Dorsolateral prefrontal cortex (tissue), 120 donors: ENCODE measurements at regions of chr3 and their contacts with region 1.

Region 1: GRCh38 chr3:47513125-47513929 is at the start of gene ELP6:
- DNase-seq: peak; percentile 93 to 97 (median 95)
- H3K4me3 ChIP-seq: peak within 1 kb of the TSS; percentile 54 to 99 (median 88)
- H3K27ac ChIP-seq: peak within 1 kb of the TSS; percentile 88 to 100 (median 99)
- H3K27me3 ChIP-seq: no peaks in the 10 kb centered on the region
- CTCF ChIP-seq: peak in 55 of 56 donors; percentile 21 to 80 (median 63)
- total RNA-seq, gene ELP6: 22.2 to 44.0 (median 33.7) TPM

Region 2: DNA sequence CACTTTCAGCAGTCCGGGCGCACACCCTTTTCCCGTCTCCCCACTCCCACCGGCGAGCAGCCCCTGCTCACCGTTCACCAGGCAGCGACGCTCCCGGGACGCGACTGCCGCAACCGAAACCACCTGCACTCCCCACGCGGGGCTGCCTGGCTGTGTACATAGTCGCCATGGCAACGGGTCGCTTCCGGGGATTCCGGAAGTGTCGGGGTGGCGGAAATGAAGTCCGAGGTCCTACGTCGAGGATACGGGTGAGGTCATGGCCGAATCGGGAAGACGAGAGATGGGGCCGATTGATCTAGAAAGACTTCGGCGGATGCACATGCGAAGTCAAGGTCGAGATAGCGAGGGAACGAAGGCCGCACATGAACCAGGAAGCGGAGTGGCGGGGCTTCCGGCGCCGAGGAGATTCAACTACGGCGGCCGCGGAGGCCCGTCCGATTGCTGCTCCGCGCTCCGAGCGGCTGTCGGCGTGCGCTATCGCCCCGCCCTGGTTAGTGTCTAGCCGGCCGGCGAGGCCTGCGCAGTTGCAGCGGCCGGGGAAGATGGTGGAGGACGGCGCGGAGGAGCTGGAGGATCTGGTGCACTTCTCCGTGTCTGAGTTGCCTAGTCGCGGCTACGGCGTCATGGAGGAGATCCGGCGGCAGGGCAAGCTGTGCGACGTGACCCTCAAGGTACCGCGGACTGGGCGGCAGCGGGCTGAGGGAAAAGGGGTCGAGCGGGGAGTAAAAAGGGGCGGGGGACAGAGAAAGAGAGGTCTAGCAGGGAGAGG is 230.7 kb before region 1 on chr3 and contains the starts of genes KIF9 and KLHL18:
- intact Hi-C with region 1: loop called in 1 of 2 experiments (anchors 5 kb)
- DNase-seq: peak; percentile 89 to 95 (median 94)
- H3K4me3 ChIP-seq: peak within 1 kb of the TSS; percentile 68 to 99 (median 87)
- H3K27ac ChIP-seq: peak within 1 kb of the TSS; percentile 63 to 99 (median 94)
- H3K27me3 ChIP-seq: no peaks in the 10 kb centered on the region
- CTCF ChIP-seq: peak in 46 of 56 donors; percentile 14 to 70 (median 39)
- total RNA-seq, gene KIF9: 3.1 to 15.9 (median 8.8) TPM
- total RNA-seq, gene KLHL18: 19.8 to 62.3 (median 38.0) TPM

Region 3: DNA sequence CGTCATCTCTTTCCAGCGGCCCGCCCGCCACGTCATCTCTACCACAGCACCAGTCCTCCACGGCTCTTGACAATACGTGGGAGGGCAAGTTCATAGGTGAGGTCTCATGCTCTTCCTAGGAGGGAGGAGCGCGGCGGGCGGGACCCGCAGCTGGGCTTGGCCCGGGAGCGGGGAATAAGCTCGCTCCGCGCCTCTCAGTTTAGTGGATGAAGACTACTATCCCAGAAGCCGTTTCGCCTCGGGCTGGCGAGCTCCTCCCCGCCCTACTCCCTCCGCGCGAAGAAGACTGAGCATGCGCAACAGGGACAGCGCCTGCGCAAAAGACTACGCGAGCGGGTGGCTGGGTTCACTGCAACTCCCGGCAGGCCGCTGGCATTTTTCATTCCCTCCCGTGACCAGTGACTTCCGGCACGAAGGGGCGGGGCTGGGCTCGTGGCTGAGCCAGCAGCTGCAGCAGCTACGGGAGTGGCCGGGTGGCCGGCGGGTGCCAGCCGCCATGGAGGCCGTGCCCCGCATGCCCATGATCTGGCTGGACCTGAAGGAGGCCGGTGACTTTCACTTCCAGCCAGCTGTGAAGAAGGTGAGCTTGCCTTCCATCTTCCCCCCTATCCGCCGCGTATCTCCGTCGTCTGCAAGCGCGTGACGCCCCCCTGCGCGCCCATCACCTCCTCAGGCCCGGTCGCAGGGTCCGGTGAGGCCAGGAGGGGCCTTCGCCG is 132.6 kb before region 1 on chr3 and contains the start of gene PTPN23:
- intact Hi-C with region 1: loop called in 1 of 2 experiments (anchors 2 kb)
- DNase-seq: peak; percentile 93 to 99 (median 96)
- H3K4me3 ChIP-seq: peak within 1 kb of the TSS; percentile 55 to 100 (median 91)
- H3K27ac ChIP-seq: peak within 1 kb of the TSS; percentile 25 to 98 (median 93)
- H3K27me3 ChIP-seq: no peaks in the 10 kb centered on the region
- CTCF ChIP-seq: peak in 30 of 56 donors; percentile 6 to 57 (median 30)
- total RNA-seq, gene PTPN23: 40.8 to 75.9 (median 53.6) TPM

Region 4: GRCh38 chr3:47420511-47421484 is 92.5 kb before region 1 on chr3:
- intact Hi-C with region 1: loop called in 1 of 2 experiments (anchors 2 kb)
- DNase-seq: peak; percentile 81 to 94 (median 87)
- H3K4me3 ChIP-seq: peak overlapping the region in 15 of 59 donors; percentile 4 to 50 (median 23)
- H3K27ac ChIP-seq: peak overlapping the region in 57 of 59 donors; percentile 25 to 91 (median 75)
- H3K27me3 ChIP-seq: no peaks in the 10 kb centered on the region
- CTCF ChIP-seq: peak; percentile 68 to 97 (median 91)

Region 5: GRCh38 chr3:47475570-47476329 is 37.6 kb before region 1 on chr3 and contains the start of gene SCAP:
- intact Hi-C with region 1: loop called (anchors 2 kb)
- DNase-seq: peak; percentile 81 to 93 (median 89)
- H3K4me3 ChIP-seq: peak within 1 kb of the TSS; percentile 56 to 99 (median 90)
- H3K27ac ChIP-seq: peak within 1 kb of the TSS; percentile 49 to 97 (median 89)
- H3K27me3 ChIP-seq: no peaks in the 10 kb centered on the region
- CTCF ChIP-seq: peak; percentile 78 to 100 (median 98)
- total RNA-seq, gene SCAP: 68.4 to 123 (median 92.0) TPM

Region 6: GRCh38 chr3:47622671-47623461 is 109.5 kb after region 1 on chr3:
- intact Hi-C with region 1: no loop called
- DNase-seq: no peak
- H3K4me3 ChIP-seq: no peak overlapping the region
- H3K27ac ChIP-seq: peak overlapping the region in 2 of 59 donors; percentile 5 to 14
- H3K27me3 ChIP-seq: no peaks in the 10 kb centered on the region
- CTCF ChIP-seq: no peak

Region 7: DNA sequence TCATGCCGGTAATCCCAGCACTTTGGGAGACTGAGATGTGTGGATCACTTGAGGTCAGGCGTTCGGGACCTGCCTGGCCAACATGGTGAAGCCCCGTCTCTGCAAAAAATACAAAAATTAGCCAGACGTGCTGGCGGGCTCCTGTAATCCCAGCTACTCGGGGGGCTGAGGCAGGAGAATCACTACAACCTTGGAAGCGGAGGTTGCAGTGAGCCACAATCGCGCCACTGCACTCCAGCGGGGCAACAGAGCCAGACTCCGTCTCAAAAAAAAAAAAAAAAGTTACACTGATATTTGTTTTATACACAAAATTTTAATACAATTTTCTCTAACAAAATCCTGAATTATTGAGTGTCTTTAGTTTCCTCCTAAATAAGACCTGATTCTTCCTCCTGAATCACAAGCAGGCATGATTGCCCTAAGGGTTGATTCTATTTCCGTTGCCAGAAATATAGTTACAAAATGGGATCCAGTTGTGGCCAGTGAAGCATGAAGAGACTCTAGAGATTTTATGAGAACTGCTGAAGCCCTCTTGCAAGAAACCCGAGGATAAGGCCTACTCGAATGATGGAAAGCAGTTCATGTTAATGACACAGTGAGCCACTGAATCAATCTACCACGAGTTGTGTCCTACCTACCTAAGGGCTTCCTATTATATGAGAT is 278.0 kb after region 1 on chr3:
- intact Hi-C with region 1: loop called in 1 of 2 experiments (anchors 2 kb)
- DNase-seq: no peak
- H3K4me3 ChIP-seq: no peak overlapping the region
- H3K27ac ChIP-seq: no peak overlapping the region
- H3K27me3 ChIP-seq: no peaks in the 10 kb centered on the region
- CTCF ChIP-seq: no peak

Region 8: DNA sequence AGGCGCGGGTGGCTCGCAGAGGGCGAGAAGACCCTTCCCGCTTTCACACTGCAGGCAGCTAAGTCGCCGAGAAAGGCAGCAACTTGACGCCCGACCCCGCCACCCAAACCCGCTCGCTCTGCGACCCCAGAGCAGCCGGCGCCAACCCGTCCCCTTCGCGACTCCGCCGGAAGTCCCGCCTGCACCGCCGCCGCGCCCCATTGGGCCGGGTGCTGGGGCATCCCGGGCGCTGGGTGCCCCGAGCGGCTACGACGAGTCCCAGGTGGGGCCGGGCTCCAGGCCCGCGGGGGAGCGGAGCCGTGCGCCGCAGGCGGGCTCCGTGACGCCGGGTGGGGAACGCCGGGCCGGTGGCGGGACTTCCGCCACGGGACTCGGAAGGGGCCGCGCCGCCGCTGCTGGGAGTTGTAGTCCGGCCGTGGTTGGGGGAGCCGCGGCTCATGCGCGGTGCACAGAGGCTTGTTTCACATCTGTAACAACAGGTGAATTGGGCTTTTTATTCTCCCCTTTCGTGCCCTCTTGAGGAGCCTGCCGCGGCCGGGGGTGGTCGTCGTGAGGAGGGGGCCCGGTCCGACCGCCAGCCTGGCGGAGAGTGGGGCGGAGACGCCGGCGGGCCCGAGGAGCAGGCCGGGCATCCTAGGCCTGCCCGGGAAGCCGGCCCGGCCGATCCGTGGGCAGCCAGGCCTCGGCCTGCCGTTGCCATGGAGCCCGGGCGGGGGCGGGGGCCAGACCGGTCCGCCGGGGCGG is 289.6 kb after region 1 on chr3 and contains the start of gene DHX30:
- intact Hi-C with region 1: loop called (anchors 5 kb)
- DNase-seq: peak; percentile 80 to 93 (median 90)
- H3K4me3 ChIP-seq: peak within 1 kb of the TSS; percentile 62 to 99 (median 93)
- H3K27ac ChIP-seq: peak within 1 kb of the TSS; percentile 69 to 99 (median 95)
- H3K27me3 ChIP-seq: no peaks in the 10 kb centered on the region
- CTCF ChIP-seq: peak in 15 of 56 donors; percentile 3 to 43 (median 18)
- total RNA-seq, gene DHX30: 83.4 to 134 (median 107) TPM